Aorta (tissue), 5 donors: ENCODE measurements at regions of chr16 and their contacts with region 1.

Region 1: GRCh38 chr16:62817034-62817433 is 780.8 kb upstream of the CDH8 start:
- DNase-seq: no peak
- ATAC-seq: no peak
- H3K4me3 ChIP-seq: no peak overlapping the region
- H3K27ac ChIP-seq: no peak overlapping the region
- H3K4me1 ChIP-seq: no peaks in the 10 kb centered on the region
- H3K27me3 ChIP-seq: no peaks in the 10 kb centered on the region

Region 2: GRCh38 chr16:62503073-62503472 is 314.0 kb before region 1 on chr16:
- intact Hi-C with region 1: loop called in 1 of 2 experiments (anchors 5 kb)
- DNase-seq: no peak
- ATAC-seq: no peak
- H3K4me3 ChIP-seq: no peak overlapping the region
- H3K27ac ChIP-seq: no peak overlapping the region
- H3K4me1 ChIP-seq: no peaks in the 10 kb centered on the region
- H3K27me3 ChIP-seq: no peaks in the 10 kb centered on the region